ENCODE measurements at regions of chr1 and their contacts with region 1.

Region 1: GRCh38 chr1:119948342-119949214 is 52.3 kb upstream of the ADAM30 start:
- DNase-seq: peak; percentile 70 to 80 (median 75)
- H3K4me3 ChIP-seq: no peak overlapping the region
- H3K27ac ChIP-seq: no peak overlapping the region
- H3K4me1 ChIP-seq: no peaks in the 10 kb centered on the region
- H3K27me3 ChIP-seq: no peaks in the 10 kb centered on the region

Region 2: GRCh38 chr1:119917304-119918055 is 31.1 kb before region 1 on chr1:
- CTCF ChIA-PET with region 1: no interaction called
- POLR2A ChIA-PET with region 1: no interaction called
- DNase-seq: no peak
- H3K4me3 ChIP-seq: no peak overlapping the region
- H3K27ac ChIP-seq: no peak overlapping the region
- H3K4me1 ChIP-seq: no peaks in the 10 kb centered on the region
- H3K27me3 ChIP-seq: no peaks in the 10 kb centered on the region

Region 3: DNA sequence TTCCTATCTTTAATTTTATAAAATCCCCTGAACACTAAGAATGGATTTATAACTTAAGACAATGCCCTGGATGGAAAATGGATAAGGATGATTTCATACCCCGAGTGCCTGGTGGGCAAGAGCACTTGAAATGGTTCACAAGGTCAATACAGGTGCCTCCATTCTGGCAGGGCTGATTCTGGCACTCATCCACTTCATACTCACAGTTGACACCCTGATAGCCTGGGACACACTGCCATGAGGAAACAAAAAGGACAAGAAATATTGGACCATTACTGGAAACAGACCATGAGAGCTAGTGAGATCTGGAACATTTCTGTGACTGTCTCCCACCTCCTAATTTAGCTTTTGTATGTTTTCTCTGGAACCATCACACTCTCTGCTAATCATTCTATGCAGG is 13.2 kb before region 1 on chr1:
- CTCF ChIA-PET with region 1: interaction called, 20 read pairs
- POLR2A ChIA-PET with region 1: no interaction called
- DNase-seq: no peak
- H3K4me3 ChIP-seq: no peak overlapping the region
- H3K27ac ChIP-seq: no peak overlapping the region
- H3K4me1 ChIP-seq: no peaks in the 10 kb centered on the region
- H3K27me3 ChIP-seq: no peaks in the 10 kb centered on the region

Region 4: DNA sequence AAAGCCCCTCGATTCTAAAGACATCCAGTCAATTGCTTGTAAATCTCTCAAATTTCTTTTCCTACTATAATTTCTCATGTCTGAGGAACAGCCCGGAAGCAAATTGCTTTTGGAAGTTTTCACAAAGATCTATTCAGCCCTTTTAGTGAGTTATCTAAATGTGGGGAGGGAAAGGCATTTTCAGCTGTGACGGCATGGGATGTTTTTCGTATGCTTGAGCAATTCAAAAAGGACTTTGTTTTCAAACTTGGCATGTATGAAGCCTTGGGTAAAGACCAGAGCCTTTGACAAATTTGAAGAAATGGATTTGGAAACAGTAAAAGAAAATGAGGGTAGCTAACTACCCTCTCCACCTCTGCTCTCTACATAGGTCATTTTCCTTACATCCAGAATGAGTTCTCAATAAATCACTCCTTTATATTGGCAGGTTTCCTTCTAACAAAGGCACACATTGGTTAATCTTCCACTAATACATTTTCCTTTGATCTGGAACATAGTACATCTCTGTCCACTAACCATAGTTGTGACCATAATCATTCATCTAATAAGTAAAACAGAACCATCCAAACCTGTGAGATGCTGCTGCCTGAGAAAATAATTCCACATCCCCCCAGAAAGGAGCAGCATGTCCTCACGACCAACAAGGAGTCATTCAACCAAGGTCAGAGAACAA is 13.9 kb after region 1 on chr1:
- CTCF ChIA-PET with region 1: interaction called, 34 read pairs
- POLR2A ChIA-PET with region 1: no interaction called
- DNase-seq: no peak
- H3K4me3 ChIP-seq: no peak overlapping the region
- H3K27ac ChIP-seq: no peak overlapping the region
- H3K4me1 ChIP-seq: no peaks in the 10 kb centered on the region
- H3K27me3 ChIP-seq: no peaks in the 10 kb centered on the region

Region 5: GRCh38 chr1:119968068-119968492 is 19.5 kb after region 1 on chr1:
- CTCF ChIA-PET with region 1: interaction called, 34 read pairs
- POLR2A ChIA-PET with region 1: no interaction called
- DNase-seq: peak; percentile 78 to 89 (median 87)
- H3K4me3 ChIP-seq: no peak overlapping the region
- H3K27ac ChIP-seq: no peak overlapping the region
- H3K4me1 ChIP-seq: peaks cover 0 to 4% (median 4%) of the 10 kb centered on the region in 4 experiments
- H3K27me3 ChIP-seq: no peaks in the 10 kb centered on the region

Region 6: GRCh38 chr1:119987112-119987511 is 38.5 kb after region 1 on chr1:
- CTCF ChIA-PET with region 1: no interaction called
- POLR2A ChIA-PET with region 1: no interaction called
- DNase-seq: peak in 2 of 3 donors; percentile 71 to 79
- H3K4me3 ChIP-seq: no peak overlapping the region
- H3K27ac ChIP-seq: peak overlapping the region in 1 of 2 experiments; percentile 60
- H3K4me1 ChIP-seq: peaks cover 14 to 26% (median 18%) of the 10 kb centered on the region in 4 experiments
- H3K27me3 ChIP-seq: no peaks in the 10 kb centered on the region

Measured in common myeloid progenitor, CD34-positive (primary cell).